Activated B cell treated with CpG ODN at 0.5 μM for 24 hours (primary cell): ENCODE measurements at regions of chr19 and their contacts with region 1.

Region 1: DNA sequence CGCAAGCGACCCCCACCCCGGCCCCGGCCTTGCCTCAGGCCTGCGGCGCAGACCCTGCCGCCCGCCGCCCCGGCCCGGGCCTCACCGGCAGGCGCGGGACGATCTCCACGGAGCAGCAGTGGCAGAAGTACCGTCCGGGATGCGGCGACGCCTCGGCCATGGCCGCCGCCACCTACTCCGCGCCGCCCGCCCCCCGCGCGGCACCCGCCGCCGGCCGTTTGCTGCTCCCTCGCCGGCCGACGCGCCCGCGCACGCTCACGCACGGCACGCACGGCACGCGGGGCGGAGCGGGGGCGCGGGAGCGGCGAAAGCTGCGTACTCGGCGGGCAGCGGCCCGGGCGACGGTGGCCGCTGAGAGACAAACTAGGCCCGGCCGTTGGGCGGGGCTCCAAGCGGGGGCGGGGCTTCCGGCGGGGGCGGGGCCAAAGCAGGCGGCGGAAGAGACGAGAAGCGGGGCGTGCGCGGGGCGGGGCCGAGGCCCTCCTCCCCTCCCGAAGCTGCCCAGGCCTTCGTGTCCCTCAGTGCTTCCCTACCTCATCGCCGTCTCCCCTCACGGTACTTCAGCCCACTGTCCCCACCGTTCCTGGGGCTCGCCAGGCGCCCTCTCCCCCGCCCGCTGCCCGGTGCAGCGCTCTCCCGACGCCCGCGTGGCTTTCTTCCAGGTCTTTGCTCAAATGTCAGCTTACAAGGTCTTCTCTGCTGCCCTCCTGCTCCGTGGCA is at the start of gene RNF126:
- DNase-seq: peak; percentile 90
- ATAC-seq: peak; percentile 67
- H3K4me3 Mint-ChIP-seq: peak within 1 kb of the TSS; percentile 95
- H3K27ac Mint-ChIP-seq: peak within 1 kb of the TSS; percentile 96
- H3K4me1 Mint-ChIP-seq: peaks cover 46% of the 10 kb centered on the region
- H3K27me3 Mint-ChIP-seq: no peaks in the 10 kb centered on the region
- CTCF ChIP-seq: no peak
- total RNA-seq, gene RNF126: 75.9 and 82.7 TPM in 2 replicates

Region 2: GRCh38 chr19:572140-572742 is 90.9 kb before region 1 on chr19 and contains the start of gene BSG:
- CTCF ChIA-PET with region 1: no interaction called
- POLR2A ChIA-PET with region 1: interaction called, 5 read pairs
- intact Hi-C with region 1: loop called (anchors 1 kb)
- DNase-seq: peak; percentile 98
- ATAC-seq: peak; percentile 82
- H3K4me3 Mint-ChIP-seq: peak within 1 kb of the TSS; percentile 97
- H3K27ac Mint-ChIP-seq: peak within 1 kb of the TSS; percentile 99
- H3K4me1 Mint-ChIP-seq: peaks cover 36% of the 10 kb centered on the region
- H3K27me3 Mint-ChIP-seq: no peaks in the 10 kb centered on the region
- CTCF ChIP-seq: no peak
- total RNA-seq, gene BSG: 150 and 152 TPM in 2 replicates

Region 3: DNA sequence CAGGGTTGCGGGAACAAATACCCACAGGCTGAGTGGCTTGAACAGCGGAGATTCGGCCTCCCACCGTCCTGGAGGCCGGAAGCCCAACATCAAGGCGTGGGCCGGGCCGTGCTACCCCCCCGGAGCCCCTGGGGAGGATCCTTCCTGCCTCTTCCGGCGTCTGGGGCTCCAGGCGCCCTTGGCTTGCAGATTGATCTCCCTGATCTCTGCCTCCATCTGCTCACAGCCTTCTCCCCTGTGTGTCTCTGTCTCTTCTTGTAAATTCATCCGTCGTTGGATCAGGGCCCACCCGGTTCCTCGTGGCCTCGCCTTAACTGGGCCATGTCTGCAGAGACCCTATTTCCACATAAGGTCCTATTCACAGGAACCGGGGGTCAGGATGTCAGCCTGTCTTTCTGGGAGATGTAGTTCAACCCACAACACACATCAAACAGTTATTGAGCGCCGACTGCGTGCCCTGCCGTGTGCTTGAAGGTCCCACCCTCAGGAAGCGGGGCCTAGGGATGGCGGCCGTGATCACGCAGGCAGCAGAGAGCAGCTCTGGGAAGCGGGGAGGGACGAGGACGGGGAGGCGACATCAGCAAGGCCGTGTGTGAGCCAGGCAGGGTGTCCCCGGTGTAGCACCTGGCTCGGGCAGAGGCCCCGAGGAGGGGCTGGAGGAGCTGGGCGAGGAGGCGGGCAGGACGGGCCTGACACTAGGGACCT is 52.2 kb before region 1 on chr19:
- CTCF ChIA-PET with region 1: no interaction called
- POLR2A ChIA-PET with region 1: interaction called, 3 read pairs
- intact Hi-C with region 1: loop called (anchors 10 kb)
- DNase-seq: no peak
- ATAC-seq: peak; percentile 67
- H3K4me3 Mint-ChIP-seq: peak overlapping the region; percentile 75
- H3K27ac Mint-ChIP-seq: no peak overlapping the region
- H3K4me1 Mint-ChIP-seq: peaks cover 16% of the 10 kb centered on the region
- H3K27me3 Mint-ChIP-seq: peaks cover 3% of the 10 kb centered on the region
- CTCF ChIP-seq: no peak

Region 4: DNA sequence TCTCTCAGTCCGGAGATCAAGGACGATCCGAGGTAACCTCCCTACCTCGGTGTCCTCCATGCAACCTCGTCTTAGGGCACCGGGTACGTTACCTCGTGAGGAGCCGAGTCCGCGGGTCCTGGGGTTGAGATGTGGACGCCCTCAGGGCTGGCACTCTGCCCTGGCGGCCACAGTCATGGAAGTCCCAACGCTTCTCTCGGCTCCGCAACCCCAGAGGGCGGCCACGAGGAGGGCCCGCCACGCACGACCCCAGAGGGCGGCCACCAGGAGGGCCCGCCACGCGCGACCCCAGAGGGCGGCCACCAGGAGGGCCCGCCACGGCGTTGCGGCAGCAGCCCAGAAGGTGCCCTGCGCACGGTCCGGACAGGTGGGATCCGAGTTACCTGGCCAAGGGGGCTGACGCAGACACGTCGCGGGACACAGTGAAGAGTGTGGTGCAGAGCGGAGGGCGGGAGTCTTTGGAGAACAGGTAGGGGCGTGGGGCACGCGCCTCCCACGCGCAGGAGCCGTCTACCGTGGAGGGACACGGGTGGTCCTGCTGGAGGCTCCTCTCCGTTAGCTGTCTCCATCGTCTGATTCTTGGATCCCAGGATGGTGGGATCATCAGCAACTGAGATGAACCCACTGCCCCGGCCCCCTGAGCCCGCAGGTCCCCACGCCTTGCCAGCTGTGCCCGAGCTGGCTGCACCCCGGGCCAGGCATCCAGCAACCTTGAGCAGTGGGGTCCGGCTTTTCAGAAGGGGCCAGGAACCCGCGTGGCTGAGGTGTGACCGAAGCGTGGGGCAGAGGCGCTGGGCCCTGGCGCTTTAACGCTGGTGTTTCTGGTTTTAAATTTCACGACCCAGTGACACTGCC is 16.4 kb before region 1 on chr19:
- CTCF ChIA-PET with region 1: no interaction called
- POLR2A ChIA-PET with region 1: interaction called, 21 read pairs
- intact Hi-C with region 1: loop called (anchors 1 kb)
- DNase-seq: no peak
- ATAC-seq: no peak
- H3K4me3 Mint-ChIP-seq: no peak overlapping the region
- H3K27ac Mint-ChIP-seq: peak overlapping the region; percentile 30
- H3K4me1 Mint-ChIP-seq: peaks cover 13% of the 10 kb centered on the region
- H3K27me3 Mint-ChIP-seq: no peaks in the 10 kb centered on the region
- CTCF ChIP-seq: no peak

Region 5: GRCh38 chr19:718991-719512 is 55.9 kb after region 1 on chr19:
- CTCF ChIA-PET with region 1: no interaction called
- POLR2A ChIA-PET with region 1: no interaction called
- intact Hi-C with region 1: no loop called
- DNase-seq: no peak
- ATAC-seq: no peak
- H3K4me3 Mint-ChIP-seq: no peak overlapping the region
- H3K27ac Mint-ChIP-seq: no peak overlapping the region
- H3K4me1 Mint-ChIP-seq: peaks cover 10% of the 10 kb centered on the region
- H3K27me3 Mint-ChIP-seq: peaks cover 22% of the 10 kb centered on the region
- CTCF ChIP-seq: no peak

Region 6: DNA sequence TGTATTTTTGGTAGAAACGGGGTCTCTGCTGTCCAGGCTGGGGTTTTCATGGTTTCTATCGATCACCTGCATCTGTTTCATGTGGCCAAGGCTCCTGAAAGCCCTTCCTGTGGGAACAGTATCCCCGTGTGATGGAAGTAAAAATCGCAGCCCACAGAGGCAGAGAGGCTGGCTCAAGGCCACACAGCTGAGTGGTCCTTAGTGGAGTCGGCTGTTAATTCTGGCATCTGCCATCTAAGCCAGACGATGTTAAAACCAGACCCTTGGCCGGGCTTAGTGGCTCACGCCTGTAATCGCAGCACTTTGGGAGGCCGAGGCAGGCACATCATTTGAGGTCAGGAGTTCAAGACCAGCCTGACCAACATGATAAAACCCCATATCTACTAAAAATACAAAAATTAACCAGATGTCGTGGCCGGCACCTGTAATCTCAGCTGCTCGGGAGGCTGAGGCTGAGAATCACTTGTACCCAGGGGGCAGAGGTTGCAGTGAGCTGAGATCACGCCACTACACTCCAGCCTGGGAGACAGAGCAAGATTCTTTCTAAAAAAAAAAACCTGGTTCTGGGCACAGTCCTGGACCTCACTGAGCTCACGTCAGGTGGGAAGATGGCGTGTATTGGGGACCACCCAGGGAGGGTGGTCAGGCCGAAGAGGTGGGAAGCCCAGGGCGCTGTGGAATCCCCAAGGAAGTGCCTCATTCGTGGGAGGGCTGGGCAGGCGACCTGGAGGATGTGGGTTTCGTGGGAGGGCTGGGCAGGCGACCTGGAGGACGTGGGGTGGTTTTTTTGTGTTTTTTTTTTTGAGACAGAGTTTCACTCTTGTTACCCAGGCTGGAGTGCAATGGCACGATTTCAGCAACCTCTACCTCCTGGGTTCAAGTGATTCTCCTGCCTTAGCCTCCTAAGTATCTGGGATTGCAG is 69.3 kb after region 1 on chr19:
- CTCF ChIA-PET with region 1: interaction called, 13 read pairs
- POLR2A ChIA-PET with region 1: no interaction called
- intact Hi-C with region 1: loop called (anchors 1 kb)
- DNase-seq: no peak
- ATAC-seq: no peak
- H3K4me3 Mint-ChIP-seq: no peak overlapping the region
- H3K27ac Mint-ChIP-seq: no peak overlapping the region
- H3K4me1 Mint-ChIP-seq: peaks cover 4% of the 10 kb centered on the region
- H3K27me3 Mint-ChIP-seq: peaks cover 2% of the 10 kb centered on the region
- CTCF ChIP-seq: no peak

Region 7: DNA sequence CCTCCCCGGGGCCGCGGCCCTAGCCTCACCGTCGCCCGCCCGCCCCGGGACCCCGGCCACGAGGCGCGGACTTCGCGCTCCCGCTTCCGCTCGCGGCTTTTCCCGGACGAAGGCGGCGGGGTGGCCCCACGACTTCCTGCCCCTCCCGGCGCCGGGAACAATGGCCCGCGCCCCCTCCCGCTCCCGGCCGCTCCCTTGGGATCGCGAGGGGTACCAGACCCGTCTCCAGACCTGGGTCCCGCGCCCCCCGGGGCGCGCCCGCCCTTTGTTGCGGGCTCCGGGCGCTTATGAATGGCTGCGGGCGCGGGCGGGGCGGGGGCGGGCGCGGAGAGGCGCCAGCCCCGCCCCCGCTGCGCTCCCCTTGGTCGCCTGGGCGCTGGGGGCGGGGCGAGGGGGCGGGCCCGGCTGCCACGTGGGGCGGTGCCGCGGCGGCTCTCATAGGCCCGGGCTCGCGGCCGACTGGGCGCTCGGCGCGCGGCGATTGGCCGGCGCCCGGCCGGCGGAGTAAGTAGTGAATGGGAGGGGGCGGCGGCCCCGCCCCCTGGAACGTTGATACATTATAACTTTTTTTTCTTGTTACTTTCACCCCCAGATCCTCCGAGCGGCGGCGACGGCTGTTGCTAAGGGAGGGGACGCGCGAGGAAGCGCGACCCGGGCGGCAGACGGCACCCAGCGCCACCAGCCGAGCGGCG is 586.3 kb after region 1 on chr19:
- CTCF ChIA-PET with region 1: no interaction called
- POLR2A ChIA-PET with region 1: no interaction called
- intact Hi-C with region 1: loop called (anchors 10 kb)
- DNase-seq: peak; percentile 84
- ATAC-seq: peak; percentile 49
- H3K4me3 Mint-ChIP-seq: peak overlapping the region; percentile 80
- H3K27ac Mint-ChIP-seq: peak overlapping the region; percentile 81
- H3K4me1 Mint-ChIP-seq: peaks cover 31% of the 10 kb centered on the region
- H3K27me3 Mint-ChIP-seq: no peaks in the 10 kb centered on the region
- CTCF ChIP-seq: no peak